ENCODE measurements at regions of chr1 and their contacts with region 1.

Region 1: DNA sequence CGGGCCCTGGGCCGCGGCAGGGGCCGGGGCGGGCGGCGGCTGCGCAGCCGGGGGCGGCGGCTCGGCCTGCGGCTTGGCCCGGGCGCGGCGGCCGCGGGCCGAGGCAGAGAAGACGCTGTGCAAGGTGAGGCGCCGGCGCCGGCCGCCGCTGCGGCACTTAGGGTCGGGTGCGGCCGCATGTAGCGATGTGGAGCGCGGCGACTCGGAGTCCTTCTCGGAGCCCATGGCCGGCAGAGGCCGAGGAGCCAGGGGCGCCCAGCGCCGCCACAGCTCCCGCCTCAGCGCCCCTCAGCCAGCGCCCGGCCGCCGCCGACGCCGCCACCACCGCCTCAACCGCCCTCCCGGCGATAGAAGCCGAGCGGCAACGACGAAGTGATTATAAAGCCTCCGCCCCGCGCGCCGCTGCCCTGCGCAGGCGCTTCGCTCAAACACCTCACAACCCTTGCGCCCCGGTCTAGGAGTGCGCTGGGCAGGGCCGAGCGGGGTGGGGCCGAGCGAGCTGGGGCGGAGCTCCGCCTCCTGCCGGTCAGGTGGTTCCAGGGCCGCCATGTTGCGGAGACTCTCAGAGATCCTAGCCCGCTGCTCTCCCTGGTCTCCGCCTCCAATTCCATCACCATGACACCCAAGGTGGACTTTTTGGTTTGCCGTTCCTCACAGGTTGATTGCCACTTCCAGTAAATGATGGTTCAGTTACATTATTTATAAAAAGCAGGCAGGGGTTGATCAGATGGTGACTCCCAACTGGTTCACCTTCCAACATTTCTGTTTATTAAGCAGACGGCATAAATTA is at the start of gene RNF19B:
- DNase-seq: peak; percentile 89 to 98 (median 96)

Region 2: DNA sequence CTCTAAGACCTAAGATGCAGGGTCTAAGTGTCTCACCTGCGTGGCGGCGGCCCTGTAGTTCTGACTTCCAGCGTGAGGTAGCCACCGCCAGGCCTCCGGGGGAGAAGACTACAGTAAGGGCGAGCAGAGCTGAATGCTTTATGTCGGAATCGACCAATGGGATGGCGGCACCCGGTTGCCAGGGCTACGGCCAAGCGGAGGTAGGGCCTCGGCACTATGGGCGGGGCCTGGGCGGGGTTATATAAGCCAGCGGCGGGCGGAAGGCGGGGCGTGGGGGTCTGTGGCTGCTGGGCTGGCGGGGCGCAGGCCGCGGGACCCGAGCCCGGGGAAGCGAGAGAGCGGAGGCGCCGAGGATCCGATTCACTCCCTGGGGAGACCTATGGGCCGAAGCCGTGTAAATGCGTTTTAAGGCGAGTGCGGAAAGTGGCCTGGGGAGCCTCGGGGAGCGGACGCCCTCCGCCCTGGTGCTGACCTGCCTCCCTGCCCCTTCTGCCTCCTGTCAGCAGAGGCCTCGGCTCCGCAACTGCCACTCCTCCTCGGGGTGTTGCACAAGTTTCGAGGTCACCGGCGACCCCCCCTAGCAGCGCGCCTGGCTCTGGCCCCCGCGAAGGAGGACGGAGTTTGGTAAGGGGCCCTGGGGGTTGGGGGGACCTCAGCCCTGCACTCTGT is 116.4 kb after region 1 on chr1 and contains the start of gene AZIN2:
- intact Hi-C with region 1: loop called (anchors 10 kb)
- DNase-seq: peak; percentile 98 to 100 (median 100)